Endothelial cell of umbilical vein (primary cell): ENCODE measurements at regions of chr18 and their contacts with region 1.

Region 1: DNA sequence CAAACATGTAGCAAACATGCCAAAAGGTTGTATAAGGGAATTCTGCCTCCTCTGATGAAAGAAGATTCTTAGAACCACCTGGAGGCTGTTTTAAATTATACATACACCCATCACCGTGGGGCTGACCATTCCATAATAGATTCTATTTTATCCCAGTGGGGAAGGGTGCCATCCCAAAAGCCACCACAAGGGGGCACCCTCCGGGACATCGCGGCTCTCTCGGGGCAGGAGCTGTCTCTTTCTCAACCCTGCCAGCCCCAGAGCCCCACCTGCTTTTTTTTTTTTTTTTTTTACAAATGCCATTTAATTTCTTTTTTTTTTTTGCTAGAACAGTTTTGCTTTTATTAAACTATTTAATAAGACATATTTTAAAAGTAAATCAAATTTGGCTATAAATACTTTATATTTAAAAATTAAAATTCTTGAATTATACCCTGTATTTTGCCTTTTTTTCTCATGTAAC is 8.6 kb upstream of the MTCL1 start:
- DNase-seq: peak; percentile 66
- H3K4me3 ChIP-seq: no peak overlapping the region
- H3K27ac ChIP-seq: no peak overlapping the region
- H3K4me1 ChIP-seq: no peaks in the 10 kb centered on the region
- H3K27me3 ChIP-seq: peaks cover 0 to 2% of the 10 kb centered on the region in 2 experiments
- CTCF ChIP-seq: peak; percentile 83 to 89
- POLR2A ChIP-seq: no peak

Region 2: GRCh38 chr18:8654503-8655451 is 42.0 kb before region 1 on chr18:
- CTCF ChIA-PET with region 1: interaction called, 40 read pairs
- POLR2A ChIA-PET with region 1: no interaction called
- dilution Hi-C with region 1: no loop called
- intact Hi-C with region 1: loop called (anchors 1 kb)
- DNase-seq: peak; percentile 29
- H3K4me3 ChIP-seq: no peak overlapping the region
- H3K27ac ChIP-seq: no peak overlapping the region
- H3K4me1 ChIP-seq: peaks cover 2% of the 10 kb centered on the region
- H3K27me3 ChIP-seq: peaks cover 2 to 6% of the 10 kb centered on the region in 2 experiments
- CTCF ChIP-seq: peak; percentile 21 to 45
- POLR2A ChIP-seq: no peak

Region 3: DNA sequence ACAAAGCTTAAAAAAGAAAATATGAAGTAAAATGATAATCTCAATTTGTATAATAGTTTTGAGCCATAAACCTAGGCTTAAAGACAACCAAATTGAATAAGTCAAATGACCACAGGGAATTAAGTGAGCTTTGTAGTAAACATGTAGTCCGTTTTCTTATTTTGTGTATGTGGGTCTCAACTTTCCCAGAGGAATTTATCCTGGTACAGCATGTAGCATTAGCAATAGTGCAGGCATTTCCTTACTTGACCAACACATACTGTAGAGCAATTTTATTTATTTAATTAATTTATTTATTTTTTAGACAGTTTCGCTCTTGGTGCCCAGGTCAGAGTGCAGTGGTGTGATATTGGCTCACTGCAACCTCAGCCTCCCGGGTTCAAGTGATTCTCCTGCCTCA is 28.9 kb before region 1 on chr18:
- CTCF ChIA-PET with region 1: interaction called, 17 read pairs
- POLR2A ChIA-PET with region 1: no interaction called
- dilution Hi-C with region 1: no loop called
- intact Hi-C with region 1: no loop called
- DNase-seq: peak; percentile 33
- H3K4me3 ChIP-seq: no peak overlapping the region
- H3K27ac ChIP-seq: no peak overlapping the region
- H3K4me1 ChIP-seq: peaks cover 19% of the 10 kb centered on the region
- H3K27me3 ChIP-seq: no peaks in the 10 kb centered on the region
- CTCF ChIP-seq: no peak
- POLR2A ChIP-seq: no peak

Region 4: DNA sequence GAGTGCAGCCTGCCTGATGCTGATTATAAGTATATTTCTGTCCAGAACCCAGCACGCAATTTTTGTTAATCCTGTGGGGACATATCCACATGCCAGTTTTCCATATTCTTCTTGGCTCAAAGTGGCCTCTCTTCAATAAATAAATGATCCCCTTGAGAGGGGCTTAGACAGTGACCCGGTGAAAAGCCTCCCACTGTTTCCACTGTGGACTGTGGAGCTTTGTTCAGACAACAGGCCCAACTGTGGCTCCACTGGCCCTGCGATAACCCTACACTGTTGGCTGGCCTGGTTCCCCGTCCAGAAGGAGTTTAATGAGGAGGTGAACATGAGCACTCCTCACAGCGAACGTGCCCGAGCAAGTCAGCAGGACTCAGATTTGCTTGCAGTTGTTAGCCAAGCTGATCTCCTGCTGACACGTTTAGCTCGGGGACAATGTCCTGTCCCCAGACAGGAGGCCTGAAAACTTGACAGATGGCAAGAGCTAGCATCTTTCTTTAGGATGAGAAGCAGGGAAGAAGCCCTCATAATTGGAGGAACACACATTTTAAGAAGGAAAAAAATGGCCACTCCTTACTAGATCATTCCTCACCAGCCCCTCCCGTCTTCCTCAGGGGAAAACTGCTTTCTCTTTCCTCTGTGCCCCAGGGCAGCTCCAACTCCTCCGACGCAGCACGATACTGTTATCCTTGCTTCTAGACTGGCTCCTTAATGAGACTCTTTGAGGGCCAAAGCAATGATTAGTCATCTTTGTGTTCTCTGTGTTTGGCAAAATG is 11.5 kb before region 1 on chr18:
- CTCF ChIA-PET with region 1: interaction called, 31 read pairs
- POLR2A ChIA-PET with region 1: no interaction called
- dilution Hi-C with region 1: no loop called
- intact Hi-C with region 1: no loop called
- DNase-seq: no peak
- H3K4me3 ChIP-seq: no peak overlapping the region
- H3K27ac ChIP-seq: no peak overlapping the region
- H3K4me1 ChIP-seq: no peaks in the 10 kb centered on the region
- H3K27me3 ChIP-seq: no peaks in the 10 kb centered on the region
- CTCF ChIP-seq: no peak
- POLR2A ChIP-seq: no peak

Region 5: GRCh38 chr18:8813611-8814010 is 116.8 kb after region 1 on chr18:
- CTCF ChIA-PET with region 1: interaction called, 12 read pairs
- POLR2A ChIA-PET with region 1: interaction called, 4 read pairs
- dilution Hi-C with region 1: no loop called
- intact Hi-C with region 1: no loop called
- DNase-seq: no peak
- H3K4me3 ChIP-seq: no peak overlapping the region
- H3K27ac ChIP-seq: no peak overlapping the region
- H3K4me1 ChIP-seq: peaks cover 12% of the 10 kb centered on the region
- H3K27me3 ChIP-seq: no peaks in the 10 kb centered on the region
- CTCF ChIP-seq: no peak
- POLR2A ChIP-seq: no peak

Region 6: GRCh38 chr18:8988261-8988871 is 291.6 kb after region 1 on chr18:
- CTCF ChIA-PET with region 1: interaction called, 95 read pairs
- POLR2A ChIA-PET with region 1: interaction called, 3 read pairs
- dilution Hi-C with region 1: no loop called
- intact Hi-C with region 1: loop called (anchors 1 kb)
- DNase-seq: peak; percentile 62
- H3K4me3 ChIP-seq: no peak overlapping the region
- H3K27ac ChIP-seq: no peak overlapping the region
- H3K4me1 ChIP-seq: no peaks in the 10 kb centered on the region
- H3K27me3 ChIP-seq: no peaks in the 10 kb centered on the region
- CTCF ChIP-seq: peak; percentile 78 to 87
- POLR2A ChIP-seq: no peak